Activated CD4-positive, alpha-beta T cell treated with anti-CD3 and anti-CD28 coated beads, Interleukin-2, amount 10 ng/mL, durations not matched to agents 24 days and 14 days (primary cell): ENCODE measurements at regions of chr3 and their contacts with region 1.

Region 1: GRCh38 chr3:10248184-10249080 is at the start of gene TATDN2:
- DNase-seq: peak; percentile 98
- H3K4me3 Mint-ChIP-seq: peak within 1 kb of the TSS; percentile 92
- H3K27ac Mint-ChIP-seq: peak within 1 kb of the TSS; percentile 98
- H3K4me1 Mint-ChIP-seq: peaks cover 46% of the 10 kb centered on the region
- H3K27me3 Mint-ChIP-seq: no peaks in the 10 kb centered on the region
- total RNA-seq, gene TATDN2: 70.9 and 74.4 TPM in 2 replicates

Region 2: GRCh38 chr3:9843715-9844438 is 404.6 kb before region 1 on chr3 and contains the start of gene RPUSD3:
- intact Hi-C with region 1: loop called (anchors 10 kb)
- DNase-seq: peak; percentile 99
- H3K4me3 Mint-ChIP-seq: peak within 1 kb of the TSS; percentile 99
- H3K27ac Mint-ChIP-seq: peak within 1 kb of the TSS; percentile 98
- H3K4me1 Mint-ChIP-seq: peaks cover 26% of the 10 kb centered on the region
- H3K27me3 Mint-ChIP-seq: no peaks in the 10 kb centered on the region
- total RNA-seq, gene RPUSD3: 84.3 and 85.7 TPM in 2 replicates

Region 3: DNA sequence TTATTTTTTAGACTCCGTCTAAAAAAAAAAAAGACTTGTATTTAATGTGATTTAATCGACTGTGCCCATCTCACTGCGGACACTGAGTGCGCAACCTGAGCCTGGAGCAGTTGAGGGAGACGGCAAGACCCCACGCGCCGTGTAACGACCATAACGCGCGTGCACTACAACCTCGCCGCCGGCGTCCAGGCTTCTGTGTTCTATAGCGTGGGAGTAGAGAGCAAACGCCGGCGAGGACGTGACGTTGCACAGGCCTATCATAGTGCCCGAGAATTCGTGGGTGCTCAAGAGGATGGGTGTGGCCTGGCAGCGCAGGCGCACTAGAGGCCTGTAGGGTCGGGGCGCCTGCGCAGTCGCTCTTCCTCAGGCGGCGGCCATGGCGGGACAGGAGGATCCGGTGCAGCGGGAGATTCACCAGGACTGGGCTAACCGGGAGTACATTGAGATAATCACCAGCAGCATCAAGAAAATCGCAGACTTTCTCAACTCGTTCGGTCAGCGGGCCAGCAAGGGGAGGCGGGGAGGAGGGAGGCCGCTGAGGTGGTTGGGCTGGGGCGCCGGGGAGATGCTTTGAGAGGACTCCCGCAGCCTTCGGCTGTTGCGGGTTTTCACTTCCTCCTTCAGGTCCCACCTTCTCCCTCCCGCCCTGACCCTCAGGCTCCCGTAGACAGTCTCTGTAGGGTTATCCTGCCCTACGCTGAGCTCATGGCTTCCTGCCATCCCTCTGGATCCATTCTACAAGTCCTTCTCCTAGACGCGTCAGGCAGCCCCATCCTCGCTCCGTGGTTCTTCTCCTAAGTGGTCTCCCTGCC is 132.9 kb before region 1 on chr3 and contains the start of gene BRK1:
- intact Hi-C with region 1: loop called (anchors 1 kb)
- DNase-seq: peak; percentile 97
- H3K4me3 Mint-ChIP-seq: peak within 1 kb of the TSS; percentile 98
- H3K27ac Mint-ChIP-seq: peak within 1 kb of the TSS; percentile 93
- H3K4me1 Mint-ChIP-seq: peaks cover 25% of the 10 kb centered on the region
- H3K27me3 Mint-ChIP-seq: peaks cover 2% of the 10 kb centered on the region
- total RNA-seq, gene BRK1: 98.8 and 99.6 TPM in 2 replicates

Region 4: GRCh38 chr3:10164546-10165393 is 83.7 kb before region 1 on chr3 and contains the start of gene IRAK2:
- intact Hi-C with region 1: loop called (anchors 2 kb)
- DNase-seq: peak; percentile 88
- H3K4me3 Mint-ChIP-seq: peak within 1 kb of the TSS; percentile 81
- H3K27ac Mint-ChIP-seq: peak within 1 kb of the TSS; percentile 29
- H3K4me1 Mint-ChIP-seq: peaks cover 22% of the 10 kb centered on the region
- H3K27me3 Mint-ChIP-seq: no peaks in the 10 kb centered on the region
- total RNA-seq, gene IRAK2: 4.5 and 5.1 TPM in 2 replicates

Region 5: DNA sequence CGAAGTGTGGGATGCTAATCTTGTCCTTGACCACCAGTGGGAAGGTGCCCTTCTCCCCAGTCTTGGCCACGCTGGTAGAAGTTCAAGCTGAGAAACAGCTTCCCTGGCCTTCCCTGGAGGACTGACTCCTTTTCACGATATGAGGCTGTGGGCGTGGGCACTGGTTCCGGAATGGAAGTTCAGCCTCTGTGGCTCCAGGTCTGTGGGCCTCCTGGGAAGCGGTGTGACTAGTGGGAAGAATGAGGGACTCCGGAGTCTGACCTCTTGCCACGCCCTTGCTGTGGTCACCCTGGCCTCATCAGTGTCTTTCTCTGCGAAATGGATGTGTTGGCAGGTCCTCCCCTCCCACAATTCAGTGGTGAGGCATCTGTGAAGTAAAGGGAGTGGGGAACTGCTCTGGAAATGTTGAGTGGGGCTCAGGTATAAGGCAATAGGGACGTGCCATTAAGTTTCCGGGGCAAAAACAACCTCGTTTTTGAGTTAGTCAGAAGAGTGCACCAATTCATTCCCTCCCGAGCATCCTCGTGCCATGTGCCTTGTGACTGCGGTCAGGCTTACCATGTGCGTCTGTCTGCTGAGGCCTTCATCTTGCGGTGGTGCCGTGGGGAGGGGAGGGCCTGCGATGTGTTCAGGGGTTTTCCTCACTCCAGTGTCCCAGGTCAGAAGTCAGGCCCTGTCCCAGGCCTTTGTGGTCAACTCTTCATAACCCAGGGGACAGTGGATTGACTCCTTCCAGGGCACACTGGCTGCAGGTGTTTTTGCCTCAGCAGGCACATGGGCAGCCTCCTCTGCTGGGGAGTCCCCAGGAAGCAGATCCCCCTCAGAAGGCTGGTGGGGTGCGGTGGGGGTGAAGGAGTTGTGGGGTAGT is 84.3 kb after region 1 on chr3:
- intact Hi-C with region 1: no loop called
- DNase-seq: no peak
- H3K4me3 Mint-ChIP-seq: no peak overlapping the region
- H3K27ac Mint-ChIP-seq: no peak overlapping the region
- H3K4me1 Mint-ChIP-seq: peaks cover 8% of the 10 kb centered on the region
- H3K27me3 Mint-ChIP-seq: peaks cover 22% of the 10 kb centered on the region